Tibial artery (tissue), 4 donors: ENCODE measurements at regions of chr1 and their contacts with region 1.

Region 1: GRCh38 chr1:1349256-1350012 is at the start of gene DVL1:
- DNase-seq: peak; percentile 44 to 81
- H3K4me3 ChIP-seq: peak within 1 kb of the TSS; percentile 81 to 84
- H3K27ac ChIP-seq: peak within 1 kb of the TSS; percentile 87 to 88
- H3K4me1 ChIP-seq: peaks cover 0 to 74% (median 57%) of the 10 kb centered on the region in 4 donors
- H3K27me3 ChIP-seq: no peaks in the 10 kb centered on the region
- CTCF ChIP-seq: peak; percentile 53 to 55

Region 2: GRCh38 chr1:1324521-1325287 is 24.7 kb before region 1 on chr1 and contains the starts of genes CPTP and INTS11:
- intact Hi-C with region 1: no loop called
- DNase-seq: peak; percentile 87 to 97
- H3K4me3 ChIP-seq: peak within 1 kb of the TSS; percentile 90 to 99
- H3K27ac ChIP-seq: peak within 1 kb of the TSS; percentile 82 to 94
- H3K4me1 ChIP-seq: peaks cover 0 to 59% (median 46%) of the 10 kb centered on the region in 4 donors
- H3K27me3 ChIP-seq: no peaks in the 10 kb centered on the region
- CTCF ChIP-seq: no peak

Region 3: DNA sequence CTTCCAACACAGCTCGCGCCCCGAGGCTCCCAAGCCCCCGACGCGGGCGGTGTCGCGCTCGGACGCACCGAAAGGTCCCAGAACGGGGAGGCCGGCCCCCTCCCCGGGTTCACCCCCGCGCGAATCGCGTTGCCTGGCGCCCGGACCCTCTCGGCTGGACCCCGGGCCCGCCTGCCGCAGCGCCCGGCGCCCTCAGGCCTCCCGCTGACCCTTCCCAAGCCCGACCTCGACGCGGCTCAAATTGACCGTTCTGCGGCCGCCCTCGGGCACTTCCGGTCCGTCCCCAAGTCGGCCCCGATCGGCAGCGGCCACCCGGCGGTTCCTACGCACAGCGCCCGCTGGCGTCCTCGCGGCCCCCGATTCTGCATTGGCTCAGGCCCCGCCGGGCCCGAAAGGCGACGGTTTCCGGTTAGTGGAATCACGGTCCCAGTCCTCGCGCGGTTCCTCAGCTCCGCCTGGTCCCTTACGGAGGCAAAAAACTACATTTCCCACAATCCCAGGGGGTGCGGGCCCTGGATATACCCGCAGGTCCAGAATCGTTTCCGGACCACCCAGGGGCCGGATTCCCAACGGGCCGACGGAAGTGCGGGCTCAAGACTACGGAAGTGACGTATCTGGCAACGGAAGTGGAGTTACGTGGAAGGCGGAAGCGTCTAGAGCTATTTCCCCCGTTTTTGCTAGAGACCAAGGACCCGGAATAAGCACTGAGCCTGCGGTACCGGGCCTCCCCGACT is 25.7 kb after region 1 on chr1 and contains the start of gene AURKAIP1:
- intact Hi-C with region 1: loop called (anchors 2 kb)
- DNase-seq: peak; percentile 99
- H3K4me3 ChIP-seq: peak within 1 kb of the TSS; percentile 94 to 99
- H3K27ac ChIP-seq: peak within 1 kb of the TSS; percentile 94 to 99
- H3K4me1 ChIP-seq: peaks cover 0 to 36% (median 34%) of the 10 kb centered on the region in 4 donors
- H3K27me3 ChIP-seq: no peaks in the 10 kb centered on the region
- CTCF ChIP-seq: peak in 1 of 2 experiments; percentile 40

Region 4: GRCh38 chr1:1387098-1388077 is 38.0 kb after region 1 on chr1:
- intact Hi-C with region 1: no loop called
- DNase-seq: no peak
- H3K4me3 ChIP-seq: no peak overlapping the region
- H3K27ac ChIP-seq: no peak overlapping the region
- H3K4me1 ChIP-seq: no peaks in the 10 kb centered on the region
- H3K27me3 ChIP-seq: no peaks in the 10 kb centered on the region
- CTCF ChIP-seq: no peak

Region 5: DNA sequence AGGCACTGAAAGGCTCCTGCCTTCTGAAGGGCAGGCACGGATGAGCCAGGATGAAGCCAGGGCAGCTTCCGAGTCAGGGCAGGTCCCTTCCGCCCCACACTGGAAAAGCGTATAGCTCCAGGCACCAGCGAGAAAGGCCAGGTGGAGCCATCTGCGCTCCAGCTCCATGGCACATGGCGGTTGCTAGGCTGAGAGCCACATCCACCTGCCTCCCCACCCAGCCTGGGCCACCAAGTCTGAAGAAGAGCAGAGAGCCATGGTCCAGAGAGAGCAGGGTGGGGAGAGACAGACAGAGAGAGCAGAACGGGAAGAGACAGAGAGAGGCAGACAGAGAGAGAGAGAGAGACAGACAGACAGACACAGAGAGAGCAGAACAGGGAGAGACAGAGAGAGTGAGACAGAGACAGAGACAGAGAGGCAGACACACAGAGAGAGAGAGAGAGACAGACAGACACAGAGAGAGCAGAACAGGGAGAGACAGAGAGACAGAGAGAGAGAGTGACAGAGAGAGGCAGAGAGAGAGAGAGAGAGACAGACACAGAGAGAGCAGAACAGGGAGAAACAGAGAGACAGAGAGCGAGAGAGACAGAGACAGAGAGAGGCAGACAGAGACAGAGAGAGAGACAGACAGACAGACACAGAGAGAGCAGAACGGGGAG is 245.3 kb after region 1 on chr1:
- intact Hi-C with region 1: no loop called
- DNase-seq: no peak
- H3K4me3 ChIP-seq: no peak overlapping the region
- H3K27ac ChIP-seq: no peak overlapping the region
- H3K4me1 ChIP-seq: peaks cover 0 to 19% (median 5%) of the 10 kb centered on the region in 4 donors
- H3K27me3 ChIP-seq: peaks cover 0 to 36% of the 10 kb centered on the region in 2 donors
- CTCF ChIP-seq: no peak